Heart right ventricle (tissue), 16 donors: ENCODE measurements at regions of chr1 and their contacts with region 1.

Region 1: DNA sequence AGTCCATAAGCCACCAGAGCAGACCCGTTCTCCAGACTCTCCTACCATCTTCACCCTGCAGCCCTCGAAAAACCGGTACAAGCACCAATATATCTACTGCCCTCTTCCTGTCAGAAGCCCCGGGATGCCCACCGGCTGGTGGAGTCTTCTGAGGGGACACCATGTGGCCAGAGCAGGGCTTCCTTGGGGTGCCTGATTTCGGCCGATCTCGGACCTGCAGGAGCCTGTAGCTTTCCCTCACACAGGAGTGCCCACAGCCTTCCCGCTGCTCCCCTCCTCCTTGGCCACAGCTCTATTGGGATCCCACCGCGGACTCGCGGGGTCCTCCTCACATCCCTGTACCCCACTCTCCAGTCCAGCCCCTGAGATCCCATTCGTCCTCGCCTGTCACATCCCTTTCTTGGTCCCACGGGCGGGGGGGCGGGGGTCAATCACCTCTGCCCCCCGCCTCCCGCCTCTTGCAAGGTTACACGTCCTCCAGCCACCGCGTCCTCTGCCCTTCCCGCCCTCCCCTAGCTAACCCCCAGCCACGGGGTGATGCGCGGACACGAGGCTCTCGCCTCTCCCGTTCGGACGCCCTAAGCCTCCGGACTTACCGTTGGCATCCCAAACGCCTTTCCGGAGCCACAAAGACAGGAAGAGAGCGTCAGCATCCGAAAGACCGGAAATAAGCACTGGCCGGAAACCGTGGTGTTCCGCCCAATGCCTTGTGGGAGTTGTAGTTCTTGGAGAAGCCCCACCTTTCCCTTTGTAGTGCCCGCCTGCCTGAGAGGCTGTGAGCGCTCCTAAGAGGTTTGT is at the start of gene SSR2:
- DNase-seq: peak; percentile 75 to 93
- ATAC-seq: peak; percentile 95 to 99 (median 99)
- H3K4me3 ChIP-seq: peak within 1 kb of the TSS; percentile 56 to 98 (median 80)
- H3K27ac ChIP-seq: peak within 1 kb of the TSS; percentile 63 to 98 (median 92)
- H3K4me1 ChIP-seq: peaks cover 3 to 24% (median 13%) of the 10 kb centered on the region in 9 donors
- H3K27me3 ChIP-seq: no peaks in the 10 kb centered on the region
- CTCF ChIP-seq: no peak
- total RNA-seq, gene SSR2: 70.3 to 124 (median 73.7) TPM

Region 2: DNA sequence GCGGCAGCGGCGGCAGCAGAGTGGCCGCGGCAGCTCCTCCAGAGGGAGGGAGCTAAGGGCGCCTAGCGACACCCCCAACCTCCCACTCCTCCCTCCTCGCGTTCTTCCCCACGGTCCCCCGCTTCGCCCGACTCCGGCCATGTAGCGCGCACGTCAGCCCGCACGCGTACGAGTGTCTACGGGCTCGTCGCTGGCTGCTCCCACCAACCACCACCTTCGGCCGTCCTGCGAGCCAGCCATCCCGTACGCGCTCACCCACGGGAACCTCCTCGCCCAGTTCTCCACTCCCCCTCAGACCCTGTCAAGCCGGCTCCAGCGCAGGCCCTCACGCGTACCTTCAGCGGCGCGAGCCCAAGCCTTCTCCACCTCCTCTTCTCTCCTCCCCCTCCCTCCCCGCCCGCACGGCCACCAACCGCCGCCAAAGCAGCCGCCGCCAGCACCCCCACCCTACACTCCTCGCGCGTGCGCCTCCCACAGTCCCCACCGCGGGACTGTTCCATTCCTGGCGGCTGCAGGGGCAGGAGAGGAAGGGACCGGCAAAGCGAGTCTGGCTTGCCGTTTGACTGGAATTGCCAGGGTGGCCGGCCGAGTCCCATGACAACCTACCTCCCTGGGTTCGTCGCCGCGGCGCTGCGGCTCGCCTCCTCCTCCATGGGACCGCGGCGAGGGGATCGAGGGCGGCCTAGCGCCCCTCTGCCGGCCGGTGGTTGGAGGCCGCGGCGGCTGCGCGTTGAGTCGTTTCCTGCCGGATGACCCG is 332.0 kb before region 1 on chr1 and contains the start of gene YY1AP1:
- intact Hi-C with region 1: no loop called
- DNase-seq: peak; percentile 93 to 94
- ATAC-seq: peak; percentile 95 to 98 (median 97)
- H3K4me3 ChIP-seq: peak within 1 kb of the TSS; percentile 85 to 100 (median 93)
- H3K27ac ChIP-seq: peak within 1 kb of the TSS; percentile 91 to 100 (median 98)
- H3K4me1 ChIP-seq: peaks cover 9 to 61% (median 46%) of the 10 kb centered on the region in 9 donors
- H3K27me3 ChIP-seq: no peaks in the 10 kb centered on the region
- CTCF ChIP-seq: peak in 4 of 9 donors; percentile 11 to 27 (median 16)
- total RNA-seq, gene YY1AP1: 61.4 to 85.1 (median 69.5) TPM

Region 3: GRCh38 chr1:156054500-156055280 is 34.2 kb after region 1 on chr1 and contains the start of gene LAMTOR2:
- intact Hi-C with region 1: loop called in 2 of 10 experiments (anchors 5 kb)
- DNase-seq: peak; percentile 96 to 98
- ATAC-seq: peak; percentile 89 to 96 (median 93)
- H3K4me3 ChIP-seq: peak within 1 kb of the TSS; percentile 66 to 86 (median 79)
- H3K27ac ChIP-seq: peak within 1 kb of the TSS; percentile 89 to 99 (median 96)
- H3K4me1 ChIP-seq: peaks cover 5 to 49% (median 31%) of the 10 kb centered on the region in 9 donors
- H3K27me3 ChIP-seq: no peaks in the 10 kb centered on the region
- CTCF ChIP-seq: peak in 2 of 9 donors; percentile 9 to 17
- total RNA-seq, gene LAMTOR2: 49.4 to 64.9 (median 59.6) TPM